Calu3 (cell line): ENCODE measurements at regions of chr5 and their contacts with region 1.

Region 1: GRCh38 chr5:152427721-152428120 is 22.6 kb upstream of the NMUR2 start:
- DNase-seq: no peak
- H3K4me3 Mint-ChIP-seq: no peak overlapping the region
- H3K27ac Mint-ChIP-seq: no peak overlapping the region
- H3K4me1 Mint-ChIP-seq: peaks cover 6% of the 10 kb centered on the region
- H3K27me3 Mint-ChIP-seq: no peaks in the 10 kb centered on the region
- CTCF ChIP-seq: no peak

Region 2: GRCh38 chr5:152297881-152298280 is 129.8 kb before region 1 on chr5:
- CTCF ChIA-PET with region 1: no interaction called
- intact Hi-C with region 1: no loop called
- DNase-seq: no peak
- H3K4me3 Mint-ChIP-seq: no peak overlapping the region
- H3K27ac Mint-ChIP-seq: no peak overlapping the region
- H3K4me1 Mint-ChIP-seq: peaks cover 21% of the 10 kb centered on the region
- H3K27me3 Mint-ChIP-seq: no peaks in the 10 kb centered on the region
- CTCF ChIP-seq: no peak

Region 3: GRCh38 chr5:152379331-152379730 is 48.4 kb before region 1 on chr5:
- CTCF ChIA-PET with region 1: no interaction called
- intact Hi-C with region 1: loop called (anchors 1 kb)
- DNase-seq: no peak
- H3K4me3 Mint-ChIP-seq: no peak overlapping the region
- H3K27ac Mint-ChIP-seq: peak overlapping the region; percentile 28
- H3K4me1 Mint-ChIP-seq: peaks cover 60% of the 10 kb centered on the region
- H3K27me3 Mint-ChIP-seq: no peaks in the 10 kb centered on the region
- CTCF ChIP-seq: no peak

Region 4: DNA sequence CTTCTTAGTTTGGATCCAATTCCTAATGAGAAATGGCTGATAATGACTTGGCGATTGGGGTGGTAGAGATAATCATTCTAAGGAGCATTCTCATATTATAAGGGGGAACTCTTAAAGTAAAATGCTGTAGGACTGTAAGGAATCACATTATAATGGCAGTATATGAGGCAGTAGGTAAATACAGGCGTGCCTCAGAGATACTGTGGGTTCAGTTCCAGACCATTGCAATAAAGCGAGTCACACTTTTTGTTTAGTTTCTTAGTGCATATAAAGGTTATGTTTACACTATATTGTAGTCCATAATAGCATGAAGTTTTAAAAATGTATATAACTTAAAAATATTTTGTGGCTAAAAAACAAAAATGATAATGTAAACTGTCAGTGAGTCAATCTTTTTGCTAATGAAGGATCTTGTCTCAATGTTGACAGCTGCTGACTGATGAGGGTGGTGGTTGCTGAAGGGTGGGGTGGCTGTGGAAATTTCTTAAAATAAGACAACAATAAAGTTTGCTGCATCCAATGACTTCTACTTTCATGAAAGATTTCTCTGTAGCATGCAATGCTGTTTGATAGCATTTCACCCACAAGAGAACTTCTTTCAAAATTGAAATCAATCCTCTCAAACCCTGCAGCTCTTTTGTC is 38.4 kb before region 1 on chr5:
- CTCF ChIA-PET with region 1: no interaction called
- intact Hi-C with region 1: loop called (anchors 2 kb)
- DNase-seq: no peak
- H3K4me3 Mint-ChIP-seq: no peak overlapping the region
- H3K27ac Mint-ChIP-seq: no peak overlapping the region
- H3K4me1 Mint-ChIP-seq: peaks cover 59% of the 10 kb centered on the region
- H3K27me3 Mint-ChIP-seq: no peaks in the 10 kb centered on the region
- CTCF ChIP-seq: no peak

Region 5: GRCh38 chr5:152400846-152401245 is 26.9 kb before region 1 on chr5:
- CTCF ChIA-PET with region 1: no interaction called
- intact Hi-C with region 1: loop called (anchors 2 kb)
- DNase-seq: no peak
- H3K4me3 Mint-ChIP-seq: peak overlapping the region; percentile 96
- H3K27ac Mint-ChIP-seq: peak overlapping the region; percentile 38
- H3K4me1 Mint-ChIP-seq: peaks cover 38% of the 10 kb centered on the region
- H3K27me3 Mint-ChIP-seq: no peaks in the 10 kb centered on the region
- CTCF ChIP-seq: no peak

Region 6: GRCh38 chr5:152456815-152457443 is 29.2 kb after region 1 on chr5:
- CTCF ChIA-PET with region 1: interaction called, 4 read pairs
- intact Hi-C with region 1: loop called (anchors 2 kb)
- DNase-seq: no peak
- H3K4me3 Mint-ChIP-seq: no peak overlapping the region
- H3K27ac Mint-ChIP-seq: peak overlapping the region; percentile 55
- H3K4me1 Mint-ChIP-seq: peaks cover 55% of the 10 kb centered on the region
- H3K27me3 Mint-ChIP-seq: no peaks in the 10 kb centered on the region
- CTCF ChIP-seq: no peak

Region 7: GRCh38 chr5:152472083-152472482 is 44.4 kb after region 1 on chr5:
- CTCF ChIA-PET with region 1: no interaction called
- intact Hi-C with region 1: no loop called
- DNase-seq: no peak
- H3K4me3 Mint-ChIP-seq: no peak overlapping the region
- H3K27ac Mint-ChIP-seq: no peak overlapping the region
- H3K4me1 Mint-ChIP-seq: peaks cover 42% of the 10 kb centered on the region
- H3K27me3 Mint-ChIP-seq: no peaks in the 10 kb centered on the region
- CTCF ChIP-seq: no peak

Region 8: DNA sequence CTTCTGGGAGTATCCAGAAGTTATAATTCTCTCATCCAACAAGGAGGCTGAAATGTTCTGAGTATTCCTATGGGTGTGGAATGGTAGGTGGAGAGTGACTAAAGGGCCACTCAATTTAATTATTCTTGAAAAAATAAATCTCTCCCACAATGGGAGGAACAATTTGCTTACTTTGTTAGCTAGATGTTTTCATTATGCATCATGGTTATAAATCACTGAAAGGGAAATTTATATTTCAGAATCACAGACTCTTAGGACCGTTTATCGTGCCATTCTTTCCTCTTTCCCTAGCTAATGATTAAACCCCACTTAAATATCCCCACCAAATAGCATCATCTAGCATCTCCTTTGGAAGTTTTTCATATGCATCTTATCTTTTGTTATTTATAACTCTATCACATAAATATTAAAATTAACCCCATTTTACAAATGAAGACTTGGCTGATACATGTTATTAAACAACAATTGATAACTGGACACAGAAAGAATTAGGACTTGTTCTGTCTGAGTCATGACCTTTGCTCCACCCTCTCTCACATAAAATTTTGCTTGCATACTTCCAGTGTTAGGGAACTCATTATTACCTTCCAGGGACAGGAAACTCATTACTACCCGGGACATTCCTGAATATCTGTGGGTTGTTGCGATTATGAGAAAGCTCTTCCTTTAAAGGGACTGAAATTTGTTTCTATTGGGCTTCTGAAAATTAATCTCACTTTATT is 72.3 kb after region 1 on chr5:
- CTCF ChIA-PET with region 1: interaction called, 18 read pairs
- intact Hi-C with region 1: loop called (anchors 1 kb)
- DNase-seq: peak; percentile 62
- H3K4me3 Mint-ChIP-seq: peak overlapping the region; percentile 49
- H3K27ac Mint-ChIP-seq: peak overlapping the region; percentile 97
- H3K4me1 Mint-ChIP-seq: peaks cover 69% of the 10 kb centered on the region
- H3K27me3 Mint-ChIP-seq: no peaks in the 10 kb centered on the region
- CTCF ChIP-seq: no peak

Region 9: GRCh38 chr5:152505442-152506042 is 77.8 kb after region 1 on chr5:
- CTCF ChIA-PET with region 1: interaction called, 18 read pairs
- intact Hi-C with region 1: loop called (anchors 1 kb)
- DNase-seq: peak; percentile 73
- H3K4me3 Mint-ChIP-seq: no peak overlapping the region
- H3K27ac Mint-ChIP-seq: no peak overlapping the region
- H3K4me1 Mint-ChIP-seq: peaks cover 48% of the 10 kb centered on the region
- H3K27me3 Mint-ChIP-seq: no peaks in the 10 kb centered on the region
- CTCF ChIP-seq: peak; percentile 79